Activated B cell treated with CpG ODN at 0.5 μM for 24 hours (primary cell): ENCODE measurements at regions of chr7 and their contacts with region 1.

Region 1: DNA sequence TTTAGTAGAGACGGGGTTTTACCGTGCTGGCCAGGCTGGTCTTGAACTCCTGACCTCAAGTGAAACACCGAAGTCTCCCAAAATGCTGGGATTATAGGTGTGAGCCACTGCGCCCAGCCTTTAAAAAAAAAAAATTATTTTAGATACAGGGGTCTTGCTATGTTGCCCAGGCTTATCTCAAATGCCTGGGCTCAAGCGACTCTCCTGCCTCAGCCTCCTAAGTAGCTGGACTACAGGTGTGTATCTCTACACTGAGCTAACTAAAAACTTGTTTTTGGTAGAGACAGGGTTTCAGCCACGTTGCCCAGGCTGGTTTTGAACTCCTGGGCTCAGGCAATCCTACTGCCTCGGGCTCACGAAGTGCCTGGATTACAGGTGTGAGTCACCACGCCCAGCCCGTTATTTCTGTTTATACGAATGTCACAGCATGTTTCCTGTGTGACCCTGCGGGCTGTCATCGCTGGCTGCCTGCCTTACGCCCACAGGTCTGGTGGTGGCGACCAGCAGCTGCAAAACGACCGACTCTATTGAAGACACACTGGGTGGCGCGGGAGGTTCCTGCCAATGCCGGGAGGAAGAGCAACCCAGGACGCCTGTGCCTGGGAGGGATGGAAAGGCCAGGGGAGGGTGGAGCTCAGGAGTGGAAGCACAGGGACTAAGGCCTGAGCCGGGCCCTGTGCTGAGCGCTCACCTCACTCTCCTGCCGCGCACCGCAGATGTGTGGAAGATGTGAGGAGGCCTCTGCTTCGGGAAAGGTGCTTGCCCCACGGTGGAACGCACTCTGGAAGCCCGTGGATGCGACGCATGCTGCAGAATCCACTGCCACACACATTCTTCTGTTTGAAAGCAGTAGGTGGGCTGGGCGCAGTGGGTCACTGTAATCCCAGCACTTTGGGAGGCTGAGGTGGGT is 32.8 kb downstream of the AMZ1 start:
- DNase-seq: peak; percentile 57
- ATAC-seq: peak; percentile 82
- H3K4me3 Mint-ChIP-seq: peak overlapping the region; percentile 26
- H3K27ac Mint-ChIP-seq: peak overlapping the region; percentile 84
- H3K4me1 Mint-ChIP-seq: peaks cover 56% of the 10 kb centered on the region
- H3K27me3 Mint-ChIP-seq: no peaks in the 10 kb centered on the region
- CTCF ChIP-seq: no peak

Region 2: DNA sequence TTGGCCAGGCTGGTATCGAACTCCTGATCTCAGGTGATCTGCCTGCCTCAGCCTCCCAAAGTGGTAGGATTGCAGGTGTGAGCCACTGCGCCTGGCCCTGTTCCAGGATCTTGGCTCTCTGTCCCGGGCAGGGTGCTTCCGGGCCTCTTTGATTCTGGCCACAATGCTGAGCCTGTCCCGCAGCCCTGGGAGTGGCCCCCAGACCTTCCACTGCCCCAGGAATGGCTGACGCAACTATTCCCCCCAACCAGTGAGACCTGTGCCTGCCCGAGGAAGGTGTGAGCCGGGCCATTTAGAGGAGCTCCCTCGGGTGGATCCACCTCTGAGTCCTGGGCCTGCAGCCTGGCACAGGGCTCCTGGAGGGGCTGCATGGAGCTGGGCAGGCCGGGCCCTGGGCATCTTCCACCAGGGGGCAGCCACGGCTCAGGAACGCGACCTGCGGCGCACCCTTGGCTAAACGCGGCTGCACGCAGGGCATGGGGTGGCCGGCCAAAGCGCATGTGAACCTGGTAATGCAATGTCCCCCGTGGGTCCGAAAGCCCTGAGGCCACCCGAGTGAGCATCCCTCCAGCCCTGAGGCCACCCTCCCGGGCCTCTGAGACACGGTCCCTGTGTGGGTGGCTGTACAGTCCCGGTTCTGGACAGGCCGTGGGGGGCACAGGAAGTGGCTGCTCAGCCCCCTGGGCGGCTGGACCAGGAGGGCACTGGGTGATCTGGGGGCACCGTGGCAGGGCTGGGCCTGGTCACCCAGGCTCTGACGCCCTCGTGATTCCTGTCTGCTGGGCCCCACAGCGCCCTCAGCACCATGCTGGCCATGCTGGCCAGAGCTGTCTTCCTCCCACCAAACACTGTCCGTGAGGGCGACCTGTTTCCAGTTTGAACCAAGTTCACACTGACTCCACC is 269.4 kb before region 1 on chr7:
- CTCF ChIA-PET with region 1: interaction called, 10 read pairs
- POLR2A ChIA-PET with region 1: no interaction called
- intact Hi-C with region 1: no loop called
- DNase-seq: peak; percentile 81
- ATAC-seq: peak; percentile 99
- H3K4me3 Mint-ChIP-seq: peak overlapping the region; percentile 74
- H3K27ac Mint-ChIP-seq: no peak overlapping the region
- H3K4me1 Mint-ChIP-seq: peaks cover 6% of the 10 kb centered on the region
- H3K27me3 Mint-ChIP-seq: no peaks in the 10 kb centered on the region
- CTCF ChIP-seq: peak; percentile 88

Region 3: DNA sequence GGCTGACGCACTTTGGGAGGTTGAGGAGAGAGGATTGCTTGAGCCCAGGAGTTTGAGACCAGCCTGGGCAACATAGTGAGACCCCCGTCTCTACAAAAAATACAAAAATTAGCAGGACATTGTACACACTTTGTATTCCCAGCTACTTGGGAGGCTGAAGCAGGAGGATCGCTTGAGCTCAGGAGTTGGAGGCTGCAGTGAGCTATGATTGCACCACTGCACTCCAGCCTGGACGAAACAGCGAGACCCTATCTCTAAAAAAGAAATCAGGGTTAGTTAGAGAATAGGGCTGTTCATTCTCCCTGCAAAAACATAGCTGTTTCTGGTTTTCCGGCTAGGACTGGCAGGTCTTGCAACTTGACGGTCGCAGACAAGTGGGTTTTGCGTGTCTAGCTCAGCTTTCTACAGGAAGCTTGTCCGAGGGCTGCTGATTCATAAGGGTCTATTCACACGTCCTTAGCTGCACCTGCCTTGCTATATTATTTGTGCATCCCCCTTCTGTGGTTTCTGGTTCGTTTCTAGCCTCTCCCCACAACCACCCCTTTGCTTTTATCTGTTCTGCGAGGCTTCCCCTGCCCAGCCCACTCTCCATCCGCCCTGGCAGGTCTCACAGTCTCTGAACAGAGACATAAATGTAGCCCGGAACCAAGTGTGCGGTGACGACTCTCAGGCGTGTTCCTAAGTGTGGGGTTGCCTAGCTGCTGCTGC is 22.1 kb before region 1 on chr7:
- CTCF ChIA-PET with region 1: interaction called, 12 read pairs
- POLR2A ChIA-PET with region 1: interaction called, 7 read pairs
- intact Hi-C with region 1: loop called (anchors 2 kb)
- DNase-seq: peak; percentile 50
- ATAC-seq: peak; percentile 94
- H3K4me3 Mint-ChIP-seq: peak overlapping the region; percentile 69
- H3K27ac Mint-ChIP-seq: peak overlapping the region; percentile 75
- H3K4me1 Mint-ChIP-seq: peaks cover 21% of the 10 kb centered on the region
- H3K27me3 Mint-ChIP-seq: peaks cover 2% of the 10 kb centered on the region
- CTCF ChIP-seq: no peak

Region 4: DNA sequence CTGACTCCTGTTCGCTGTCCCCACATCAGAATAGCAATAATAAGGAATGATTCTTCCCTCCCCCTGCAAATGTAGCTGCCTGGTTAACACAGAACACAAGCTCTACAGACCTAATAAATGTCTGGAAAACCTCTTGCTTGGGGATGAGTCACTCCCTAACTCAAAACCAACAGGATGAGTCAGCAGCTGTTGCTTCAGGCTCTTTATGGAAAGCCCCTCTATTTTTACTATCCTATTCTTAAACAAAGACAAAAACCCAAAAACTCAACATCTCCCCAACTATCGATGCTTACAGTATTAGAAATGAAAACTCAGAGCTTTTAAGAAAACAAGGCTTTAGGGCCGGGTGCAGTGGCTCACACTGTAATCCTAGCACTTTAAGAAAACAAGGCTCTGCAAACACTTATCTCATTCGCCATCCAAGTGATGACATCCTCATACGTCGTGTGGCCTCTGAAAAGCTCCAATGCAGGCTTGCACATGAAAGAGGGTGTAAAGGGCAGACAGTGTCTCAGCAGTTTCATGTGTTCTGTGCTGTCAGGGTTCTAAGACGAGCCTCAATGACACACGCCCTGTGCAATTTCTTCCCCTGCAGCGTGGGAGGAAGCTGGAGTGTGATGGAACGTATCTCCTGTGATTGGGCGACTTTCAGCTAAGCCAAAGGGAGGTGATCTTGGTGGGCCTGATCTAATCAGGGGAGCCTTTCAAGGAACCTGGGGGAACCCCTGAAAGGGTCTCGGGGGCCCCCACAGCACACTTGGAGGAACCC is 37.3 kb after region 1 on chr7:
- CTCF ChIA-PET with region 1: interaction called, 6 read pairs
- POLR2A ChIA-PET with region 1: interaction called, 5 read pairs
- intact Hi-C with region 1: loop called (anchors 5 kb)
- DNase-seq: peak; percentile 24
- ATAC-seq: peak; percentile 82
- H3K4me3 Mint-ChIP-seq: peak overlapping the region; percentile 65
- H3K27ac Mint-ChIP-seq: peak overlapping the region; percentile 89
- H3K4me1 Mint-ChIP-seq: peaks cover 45% of the 10 kb centered on the region
- H3K27me3 Mint-ChIP-seq: no peaks in the 10 kb centered on the region
- CTCF ChIP-seq: no peak

Region 5: DNA sequence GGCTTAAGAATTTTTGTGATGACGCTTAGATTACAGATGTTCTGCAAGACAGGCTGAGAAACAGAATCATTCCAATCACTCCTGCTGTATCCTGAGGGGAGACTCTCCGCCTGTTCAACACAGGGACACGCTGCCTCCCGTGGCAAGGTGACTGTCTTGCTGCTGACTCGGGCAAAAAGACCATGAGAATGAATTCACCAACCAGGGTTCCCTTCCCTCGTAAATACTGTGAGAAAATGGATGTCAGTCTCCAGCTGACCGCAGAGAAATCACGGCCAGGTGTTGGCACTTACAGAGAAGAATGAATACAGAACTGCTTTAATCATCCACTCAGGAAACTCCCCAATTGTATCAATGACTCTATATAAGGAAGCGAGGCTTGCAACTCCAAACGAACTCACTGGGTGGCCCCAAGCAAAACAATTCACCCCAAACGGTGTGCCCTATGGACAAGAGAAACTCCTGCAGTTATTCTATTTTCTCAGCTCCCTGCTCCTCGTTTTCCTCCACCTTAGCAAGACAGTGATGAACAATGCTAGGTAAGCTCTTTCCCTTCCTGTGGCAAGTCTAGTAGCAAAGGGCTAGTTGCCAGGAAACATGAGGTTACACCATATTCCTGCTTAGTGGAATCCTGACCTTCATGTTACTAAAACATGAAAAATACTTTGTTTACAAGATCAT is 100.5 kb after region 1 on chr7:
- CTCF ChIA-PET with region 1: interaction called, 3 read pairs
- POLR2A ChIA-PET with region 1: interaction called, 5 read pairs
- intact Hi-C with region 1: loop called (anchors 5 kb)
- DNase-seq: no peak
- ATAC-seq: peak; percentile 67
- H3K4me3 Mint-ChIP-seq: peak overlapping the region; percentile 74
- H3K27ac Mint-ChIP-seq: peak overlapping the region; percentile 85
- H3K4me1 Mint-ChIP-seq: peaks cover 67% of the 10 kb centered on the region
- H3K27me3 Mint-ChIP-seq: no peaks in the 10 kb centered on the region
- CTCF ChIP-seq: no peak